ENCODE measurements at regions of chr10 and their contacts with region 1.

Region 1: DNA sequence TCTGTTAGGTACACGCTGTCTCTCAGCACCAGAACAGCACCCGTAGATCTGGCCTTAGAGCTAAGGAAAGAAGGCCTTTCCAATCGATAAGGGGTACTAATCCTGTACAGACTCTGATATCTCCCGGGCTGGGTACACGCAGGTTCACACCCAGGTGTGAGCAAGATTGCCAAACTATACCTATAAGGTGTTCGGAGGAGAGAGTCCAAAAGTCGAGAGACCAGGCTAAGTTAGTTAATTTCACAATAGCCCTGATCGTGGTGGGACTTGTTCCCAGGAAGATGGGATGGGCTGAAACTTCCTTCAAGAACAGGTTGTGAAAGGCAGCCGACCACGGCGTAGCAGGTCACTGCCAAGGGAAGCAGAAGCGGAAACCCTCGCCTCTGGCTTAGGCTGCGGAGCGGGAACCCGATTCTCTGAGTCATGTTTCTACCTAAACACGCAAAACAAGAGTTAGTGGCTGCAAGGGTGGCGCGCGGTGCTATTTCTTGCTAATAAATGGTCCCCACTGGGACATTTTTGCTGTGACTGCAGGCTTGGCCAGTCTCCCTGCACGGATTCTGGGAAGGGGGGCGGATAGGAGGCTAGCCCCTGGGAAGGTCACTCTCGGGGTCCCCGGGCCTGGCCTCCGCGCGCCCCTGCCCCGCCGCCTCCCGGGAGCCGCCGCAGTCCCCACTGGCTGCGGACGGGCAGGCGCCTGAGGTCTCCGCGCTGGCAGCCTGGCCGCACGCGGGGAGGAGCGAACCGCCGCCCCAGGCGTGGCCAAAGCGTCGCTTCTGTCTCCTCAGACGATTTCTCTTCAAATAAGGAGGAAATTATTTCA is 75.4 kb upstream of the PDSS1 start:
- DNase-seq: no peak
- ATAC-seq: peak; percentile 97
- H3K4me3 ChIP-seq: peak overlapping the region; percentile 15 to 53
- H3K27ac ChIP-seq: no peak overlapping the region
- H3K4me1 ChIP-seq: peaks cover 5 to 12% of the 10 kb centered on the region in 2 experiments; a peak in 3 of 4 replicates
- H3K27me3 ChIP-seq: no peaks in the 10 kb centered on the region
- CTCF ChIP-seq: no peak
- POLR2A ChIP-seq: no peak
- RAD21 ChIP-seq: no peak

Region 2: DNA sequence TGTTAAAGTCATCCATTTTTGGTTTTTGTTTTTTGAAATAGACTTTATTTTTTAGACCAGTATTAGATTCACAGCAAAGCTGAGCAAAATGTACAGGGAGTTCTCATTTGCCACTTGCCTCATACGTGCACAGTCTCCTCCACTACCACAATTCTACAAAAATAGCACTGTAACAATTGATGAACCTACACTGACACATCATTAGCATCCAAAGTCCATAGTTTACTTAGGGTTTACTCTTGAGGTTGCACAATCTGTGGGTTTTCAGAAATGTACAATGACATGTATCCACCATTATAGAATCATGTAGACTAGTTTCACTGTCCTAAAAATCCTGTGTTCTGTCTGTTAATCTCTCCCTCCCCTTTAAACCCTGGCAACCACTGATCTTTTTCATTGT is 50.4 kb before region 1 on chr10:
- CTCF ChIA-PET with region 1: no interaction called
- POLR2A ChIA-PET with region 1: no interaction called
- RAD21 ChIA-PET with region 1: no interaction called
- intact Hi-C with region 1: loop called (anchors 1 kb)
- DNase-seq: no peak
- ATAC-seq: no peak
- H3K4me3 ChIP-seq: no peak overlapping the region
- H3K27ac ChIP-seq: no peak overlapping the region
- H3K4me1 ChIP-seq: no peaks in the 10 kb centered on the region
- H3K27me3 ChIP-seq: peaks cover 4% of the 10 kb centered on the region; the same call in 1 of the 2 replicates
- CTCF ChIP-seq: no peak
- POLR2A ChIP-seq: no peak
- RAD21 ChIP-seq: no peak

Region 3: GRCh38 chr10:27319752-27320561 is 697.9 kb after region 1 on chr10:
- CTCF ChIA-PET with region 1: no interaction called
- POLR2A ChIA-PET with region 1: no interaction called
- RAD21 ChIA-PET with region 1: no interaction called
- intact Hi-C with region 1: loop called (anchors 2 kb)
- DNase-seq: no peak
- ATAC-seq: no peak
- H3K4me3 ChIP-seq: no peak overlapping the region
- H3K27ac ChIP-seq: no peak overlapping the region
- H3K4me1 ChIP-seq: no peaks in the 10 kb centered on the region
- H3K27me3 ChIP-seq: no peaks in the 10 kb centered on the region
- CTCF ChIP-seq: no peak
- POLR2A ChIP-seq: no peak
- RAD21 ChIP-seq: no peak

Measured in HCT116 (cell line).